Left lung (tissue), 14 donors: ENCODE measurements at regions of chr22 and their contacts with region 1.

Region 1: GRCh38 chr22:21712894-21713712 is 22.5 kb downstream of the YPEL1 start:
- DNase-seq: peak in 3 of 4 donors; percentile 65 to 82 (median 68)
- ATAC-seq: peak; percentile 98
- H3K4me3 ChIP-seq: no peak overlapping the region
- H3K27ac ChIP-seq: no peak overlapping the region
- H3K4me1 ChIP-seq: peaks cover 0 to 10% of the 10 kb centered on the region in 2 donors
- H3K27me3 ChIP-seq: no peaks in the 10 kb centered on the region
- CTCF ChIP-seq: peak; percentile 68 to 79

Region 2: GRCh38 chr22:21587803-21588611 is 125.1 kb before region 1 on chr22:
- intact Hi-C with region 1: no loop called
- DNase-seq: no peak
- ATAC-seq: peak; percentile 16
- H3K4me3 ChIP-seq: no peak overlapping the region
- H3K27ac ChIP-seq: peak overlapping the region in 1 of 2 donors; percentile 4
- H3K4me1 ChIP-seq: peaks cover 14 to 78% of the 10 kb centered on the region in 2 donors
- H3K27me3 ChIP-seq: no peaks in the 10 kb centered on the region
- CTCF ChIP-seq: no peak

Region 3: DNA sequence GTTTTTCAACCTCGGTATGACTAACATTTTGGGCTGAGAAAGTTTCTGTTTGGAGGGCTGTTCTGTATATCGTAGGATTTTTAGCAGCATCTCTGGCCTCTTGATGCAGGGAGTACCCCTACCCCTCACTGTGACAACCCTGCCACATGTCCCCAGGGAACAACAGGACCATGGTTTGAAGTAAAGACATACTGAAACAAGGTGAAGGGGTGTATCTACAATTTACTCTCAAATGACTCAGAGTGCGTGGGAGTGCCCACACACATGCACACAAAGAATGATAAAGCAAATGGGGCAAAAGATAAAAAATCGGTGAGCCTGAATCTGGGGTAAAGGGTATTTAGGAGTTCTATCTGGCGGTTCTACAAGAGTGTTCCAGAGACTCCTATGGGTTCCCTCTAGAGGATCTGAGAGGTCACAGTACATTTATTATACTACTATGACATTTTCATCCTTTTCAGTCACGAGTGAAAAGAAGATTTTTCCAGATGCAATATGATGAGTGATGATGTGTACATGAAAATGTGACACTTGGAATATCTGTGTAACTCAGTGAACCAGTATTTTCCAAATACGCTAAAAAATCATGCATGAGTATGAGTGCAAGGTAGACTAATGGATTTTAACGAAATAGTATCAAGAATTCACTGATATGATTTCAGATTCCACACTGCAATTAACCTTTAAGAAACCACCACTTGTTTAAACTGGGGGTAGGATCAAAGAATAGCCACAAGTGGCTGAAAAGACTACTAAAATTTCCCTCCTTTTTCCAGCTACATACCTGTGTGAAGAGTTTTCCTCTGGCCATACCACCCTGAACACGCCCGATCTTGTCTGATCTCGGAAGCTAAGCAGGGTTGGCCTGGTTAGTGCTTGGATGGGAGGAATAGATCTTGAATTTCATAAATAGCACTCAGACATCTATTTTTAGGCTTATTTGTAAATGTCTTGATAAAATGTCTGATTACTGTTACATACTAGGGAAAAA is 78.8 kb after region 1 on chr22:
- intact Hi-C with region 1: no loop called
- DNase-seq: no peak
- ATAC-seq: peak; percentile 18
- H3K4me3 ChIP-seq: no peak overlapping the region
- H3K27ac ChIP-seq: no peak overlapping the region
- H3K4me1 ChIP-seq: no peaks in the 10 kb centered on the region
- H3K27me3 ChIP-seq: no peaks in the 10 kb centered on the region
- CTCF ChIP-seq: no peak

Region 4: GRCh38 chr22:21902296-21903087 is 189.4 kb after region 1 on chr22:
- intact Hi-C with region 1: no loop called
- DNase-seq: no peak
- ATAC-seq: no peak
- H3K4me3 ChIP-seq: no peak overlapping the region
- H3K27ac ChIP-seq: no peak overlapping the region
- H3K4me1 ChIP-seq: no peaks in the 10 kb centered on the region
- H3K27me3 ChIP-seq: no peaks in the 10 kb centered on the region
- CTCF ChIP-seq: no peak

Region 5: GRCh38 chr22:21938071-21938822 is 225.1 kb after region 1 on chr22:
- intact Hi-C with region 1: loop called in 1 of 2 experiments (anchors 10 kb)
- DNase-seq: peak; percentile 94 to 99 (median 96)
- ATAC-seq: peak; percentile 94
- H3K4me3 ChIP-seq: peak overlapping the region; percentile 45 to 48
- H3K27ac ChIP-seq: peak overlapping the region; percentile 96 to 98
- H3K4me1 ChIP-seq: peaks cover 35 to 79% of the 10 kb centered on the region in 2 donors
- H3K27me3 ChIP-seq: no peaks in the 10 kb centered on the region
- CTCF ChIP-seq: peak; percentile 100